ENCODE measurements at regions of chr9 and their contacts with region 1.

Region 1: DNA sequence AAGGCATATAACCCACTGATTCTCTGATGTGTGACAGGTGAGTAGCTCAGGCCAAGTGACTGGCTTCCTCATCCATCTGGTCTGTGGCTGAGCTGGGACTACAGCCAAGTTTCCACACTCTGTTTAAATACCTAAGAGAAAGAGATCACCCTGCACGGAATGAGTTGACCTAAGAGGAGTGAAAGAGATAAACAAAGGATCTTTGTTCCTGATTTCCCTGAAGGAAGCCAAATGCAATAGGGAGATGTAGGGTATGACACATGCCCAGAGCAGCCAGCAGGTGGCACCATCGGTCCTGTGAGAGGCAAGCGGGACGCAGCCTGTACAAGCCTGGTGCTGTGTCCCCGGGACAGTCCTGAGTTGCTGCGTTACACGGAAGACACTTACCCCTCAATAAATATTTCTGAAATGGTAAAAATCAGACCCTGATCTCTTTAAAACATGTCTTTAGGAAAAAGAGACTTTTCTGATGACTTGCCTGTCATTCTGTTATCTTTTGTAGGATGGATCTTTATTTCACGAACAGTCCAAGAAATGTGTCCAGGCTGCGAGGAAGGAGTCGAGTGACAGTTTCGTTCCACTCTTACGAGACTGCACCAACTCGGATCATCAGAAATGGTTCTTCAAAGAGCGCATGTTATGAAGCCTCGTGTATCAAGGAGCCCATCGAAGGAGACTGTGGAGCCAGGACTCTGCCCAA is 41.1 kb downstream of the GALNT12 start:
- DNase-seq: peak; percentile 80
- H3K4me3 Mint-ChIP-seq: no peak overlapping the region
- H3K27ac Mint-ChIP-seq: no peak overlapping the region
- H3K4me1 Mint-ChIP-seq: peaks cover 10% of the 10 kb centered on the region
- H3K27me3 Mint-ChIP-seq: peaks cover 32% of the 10 kb centered on the region
- CTCF ChIP-seq: peak; percentile 87

Region 2: GRCh38 chr9:98807070-98807810 is 41.4 kb before region 1 on chr9 and contains the start of gene GALNT12:
- CTCF ChIA-PET with region 1: interaction called, 13 read pairs
- POLR2A ChIA-PET with region 1: no interaction called
- intact Hi-C with region 1: no loop called
- DNase-seq: no peak
- H3K4me3 Mint-ChIP-seq: peak within 1 kb of the TSS; percentile 14
- H3K27ac Mint-ChIP-seq: no peak within 1 kb of the TSS
- H3K4me1 Mint-ChIP-seq: peaks cover 39% of the 10 kb centered on the region
- H3K27me3 Mint-ChIP-seq: peaks cover 39% of the 10 kb centered on the region
- CTCF ChIP-seq: no peak
- total RNA-seq, gene GALNT12: not detected in 2 replicates

Region 3: DNA sequence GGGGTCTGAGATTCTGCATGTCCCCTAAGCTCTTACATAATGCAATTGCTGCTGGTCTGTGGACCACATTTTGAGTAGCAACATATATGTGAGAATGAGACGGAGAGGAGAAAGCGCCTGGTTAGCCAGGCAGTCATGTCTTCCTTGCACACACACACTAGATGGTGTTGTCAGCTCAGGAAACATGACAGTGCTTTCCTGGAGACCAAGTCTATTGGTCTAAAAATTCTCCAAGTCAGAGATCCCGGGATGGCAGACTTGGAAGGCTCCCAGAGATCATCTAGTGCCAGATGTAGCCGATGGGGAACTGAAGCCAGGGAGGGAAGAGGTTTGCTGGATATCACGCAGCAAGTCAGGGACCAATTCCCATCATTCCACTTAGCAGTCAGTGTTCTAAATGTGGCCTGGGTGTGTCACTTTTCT is 12.3 kb after region 1 on chr9:
- CTCF ChIA-PET with region 1: interaction called, 29 read pairs
- POLR2A ChIA-PET with region 1: no interaction called
- intact Hi-C with region 1: no loop called
- DNase-seq: peak; percentile 86
- H3K4me3 Mint-ChIP-seq: no peak overlapping the region
- H3K27ac Mint-ChIP-seq: no peak overlapping the region
- H3K4me1 Mint-ChIP-seq: peaks cover 7% of the 10 kb centered on the region
- H3K27me3 Mint-ChIP-seq: peaks cover 26% of the 10 kb centered on the region
- CTCF ChIP-seq: peak; percentile 16

Region 4: GRCh38 chr9:98890256-98890655 is 41.7 kb after region 1 on chr9:
- CTCF ChIA-PET with region 1: interaction called, 10 read pairs
- POLR2A ChIA-PET with region 1: no interaction called
- intact Hi-C with region 1: no loop called
- DNase-seq: no peak
- H3K4me3 Mint-ChIP-seq: no peak overlapping the region
- H3K27ac Mint-ChIP-seq: no peak overlapping the region
- H3K4me1 Mint-ChIP-seq: no peaks in the 10 kb centered on the region
- H3K27me3 Mint-ChIP-seq: peaks cover 39% of the 10 kb centered on the region
- CTCF ChIP-seq: no peak

Region 5: GRCh38 chr9:98900725-98901124 is 52.1 kb after region 1 on chr9:
- CTCF ChIA-PET with region 1: no interaction called
- POLR2A ChIA-PET with region 1: no interaction called
- intact Hi-C with region 1: no loop called
- DNase-seq: no peak
- H3K4me3 Mint-ChIP-seq: no peak overlapping the region
- H3K27ac Mint-ChIP-seq: no peak overlapping the region
- H3K4me1 Mint-ChIP-seq: peaks cover 5% of the 10 kb centered on the region
- H3K27me3 Mint-ChIP-seq: peaks cover 21% of the 10 kb centered on the region
- CTCF ChIP-seq: no peak

Region 6: GRCh38 chr9:99135456-99135855 is 286.9 kb after region 1 on chr9:
- CTCF ChIA-PET with region 1: interaction called, 131 read pairs
- POLR2A ChIA-PET with region 1: interaction called, 3 read pairs
- intact Hi-C with region 1: loop called (anchors 1 kb)
- DNase-seq: no peak
- H3K4me3 Mint-ChIP-seq: no peak overlapping the region
- H3K27ac Mint-ChIP-seq: no peak overlapping the region
- H3K4me1 Mint-ChIP-seq: peaks cover 2% of the 10 kb centered on the region
- H3K27me3 Mint-ChIP-seq: no peaks in the 10 kb centered on the region
- CTCF ChIP-seq: no peak

Measured in MCF 10A (cell line).